ENCODE measurements at regions of chr16 and their contacts with region 1.

Region 1: DNA sequence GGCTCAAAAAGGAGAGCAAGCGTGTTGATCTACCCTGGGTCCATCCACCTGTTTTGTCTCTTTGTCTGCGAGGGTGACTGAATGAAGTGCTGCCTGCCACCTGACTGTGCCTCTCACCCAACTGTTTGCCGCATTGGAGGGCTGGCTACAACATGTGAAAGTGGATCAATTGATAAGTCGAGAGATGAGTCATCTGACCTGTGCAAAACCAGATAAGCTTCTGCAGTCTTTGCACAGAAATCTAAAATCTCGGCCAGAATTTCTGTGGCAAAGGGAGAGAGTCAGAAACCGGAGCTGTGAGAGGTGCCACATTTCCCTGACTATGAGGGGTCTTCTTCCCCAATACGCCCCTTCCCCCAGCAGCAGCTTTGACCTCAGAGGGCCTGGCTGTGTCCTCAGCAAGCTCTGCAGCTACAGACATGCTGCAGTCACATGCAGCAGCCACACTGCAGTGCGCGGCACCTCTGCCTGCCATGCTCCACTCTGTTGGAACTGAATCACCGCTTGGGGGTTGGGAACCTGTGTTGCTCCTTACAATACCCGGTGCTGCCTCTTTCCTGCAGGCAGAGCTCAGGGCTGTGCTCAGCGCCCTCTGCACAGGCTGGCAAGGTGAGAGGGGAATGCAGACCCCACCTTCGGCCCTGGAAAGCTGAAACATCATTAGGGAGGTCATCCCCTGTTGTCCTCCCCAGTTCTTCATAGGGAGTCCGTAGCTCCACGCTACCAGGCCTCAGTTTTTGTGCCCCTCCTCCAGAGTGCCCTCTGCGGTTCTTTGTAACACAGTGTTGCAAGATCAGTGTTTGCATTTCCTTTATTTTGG is 16.2 kb upstream of the HAS3 start:
- DNase-seq: peak; percentile 55 to 62
- H3K4me3 ChIP-seq: peak overlapping the region; percentile 11; the same call in 1 of the 2 replicates
- H3K27ac ChIP-seq: no peak overlapping the region
- H3K4me1 ChIP-seq: peaks cover 23% of the 10 kb centered on the region
- H3K27me3 ChIP-seq: no peaks in the 10 kb centered on the region
- CTCF ChIP-seq: no peak

Region 2: GRCh38 chr16:68423771-68424170 is 665.5 kb before region 1 on chr16:
- CTCF ChIA-PET with region 1: interaction called, 11 read pairs
- POLR2A ChIA-PET with region 1: no interaction called
- intact Hi-C with region 1: no loop called
- DNase-seq: no peak
- H3K4me3 ChIP-seq: no peak overlapping the region
- H3K27ac ChIP-seq: no peak overlapping the region
- H3K4me1 ChIP-seq: peaks cover 9% of the 10 kb centered on the region
- H3K27me3 ChIP-seq: no peaks in the 10 kb centered on the region
- CTCF ChIP-seq: no peak

Region 3: GRCh38 chr16:68985855-68986254 is 103.4 kb before region 1 on chr16:
- CTCF ChIA-PET with region 1: no interaction called
- POLR2A ChIA-PET with region 1: interaction called, 13 read pairs
- intact Hi-C with region 1: no loop called
- DNase-seq: no peak
- H3K4me3 ChIP-seq: no peak overlapping the region
- H3K27ac ChIP-seq: no peak overlapping the region
- H3K4me1 ChIP-seq: 0 out of 2 replicates have a peak, but pooled peaks cover 3% of the 10 kb centered on the region
- H3K27me3 ChIP-seq: no peaks in the 10 kb centered on the region
- CTCF ChIP-seq: no peak

Region 4: GRCh38 chr16:69049146-69049545 is 40.2 kb before region 1 on chr16:
- CTCF ChIA-PET with region 1: no interaction called
- POLR2A ChIA-PET with region 1: no interaction called
- intact Hi-C with region 1: no loop called
- DNase-seq: no peak
- H3K4me3 ChIP-seq: no peak overlapping the region
- H3K27ac ChIP-seq: no peak overlapping the region
- H3K4me1 ChIP-seq: peaks cover 24% of the 10 kb centered on the region; the same call in 1 of the 2 replicates
- H3K27me3 ChIP-seq: no peaks in the 10 kb centered on the region
- CTCF ChIP-seq: no peak

Measured in PC-9 (cell line).